Gastrocnemius medialis (tissue), 4 donors: ENCODE measurements at regions of chr6 and their contacts with region 1.

Region 1: DNA sequence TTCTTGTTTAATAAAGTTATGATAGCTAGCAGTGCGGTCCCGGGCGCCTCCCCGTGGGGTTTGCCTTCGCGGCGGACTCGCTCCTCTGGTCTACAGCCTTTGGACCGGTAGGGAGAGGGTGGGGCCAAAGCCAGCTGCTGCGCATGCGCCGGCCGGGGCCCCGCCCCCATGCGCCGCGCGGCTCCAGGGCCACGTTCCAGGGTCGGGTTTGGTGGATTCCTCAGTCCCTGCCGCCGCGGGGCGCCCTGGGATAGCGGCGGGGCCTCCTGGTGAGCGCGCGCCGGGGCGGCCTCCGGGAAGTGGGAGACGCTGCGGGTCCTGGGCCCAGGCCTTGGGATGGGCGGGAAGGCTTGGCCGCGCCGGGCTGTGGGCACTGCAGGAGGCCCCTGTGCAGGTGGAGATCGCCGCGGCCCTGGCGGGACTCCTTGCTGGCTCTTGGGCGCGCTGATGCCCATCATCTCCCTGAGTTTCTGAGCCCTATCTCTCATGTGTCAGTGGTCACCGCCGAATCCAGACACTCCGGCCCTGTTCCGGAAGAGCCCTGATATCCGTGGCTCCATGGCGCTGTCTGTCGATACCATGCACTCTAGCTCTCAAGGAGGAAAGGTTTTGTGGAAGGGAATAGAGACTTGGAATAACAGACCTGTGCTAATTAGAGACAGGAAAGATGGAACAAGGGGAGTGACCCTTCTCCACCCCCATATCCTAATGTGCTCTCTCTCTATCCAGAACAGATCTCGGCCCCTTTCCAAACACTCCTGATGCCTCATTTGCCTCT is at the start of gene VARS2:
- DNase-seq: peak; percentile 86 to 95
- ATAC-seq: peak; percentile 87 to 92
- H3K4me3 ChIP-seq: peak within 1 kb of the TSS; percentile 64 to 70 (median 68)
- H3K27ac ChIP-seq: peak within 1 kb of the TSS; percentile 88 to 96 (median 94)
- H3K4me1 ChIP-seq: peaks cover 18 to 26% of the 10 kb centered on the region in 2 donors
- H3K27me3 ChIP-seq: no peaks in the 10 kb centered on the region
- CTCF ChIP-seq: peak; percentile 39 to 68 (median 59)
- POLR2A ChIP-seq: peak; percentile 85 to 89
- total RNA-seq, gene VARS2: 16.0 to 38.5 (median 19.3) TPM

Region 2: GRCh38 chr6:30672445-30673253 is 241.6 kb before region 1 on chr6 and contains the start of gene DHX16:
- in situ Hi-C with region 1: no loop called
- intact Hi-C with region 1: loop called (anchors 5 kb)
- DNase-seq: peak; percentile 91 to 96
- ATAC-seq: peak; percentile 90 to 94
- H3K4me3 ChIP-seq: peak within 1 kb of the TSS; percentile 78 to 95 (median 91)
- H3K27ac ChIP-seq: peak within 1 kb of the TSS; percentile 78 to 88 (median 82)
- H3K4me1 ChIP-seq: peaks cover 15 to 18% of the 10 kb centered on the region in 2 donors
- H3K27me3 ChIP-seq: no peaks in the 10 kb centered on the region
- CTCF ChIP-seq: peak; percentile 65 to 89 (median 86)
- POLR2A ChIP-seq: peak in 1 of 2 donors; percentile 30
- total RNA-seq, gene DHX16: 39.1 to 74.8 (median 49.4) TPM

Region 3: GRCh38 chr6:30828027-30828960 is 86.0 kb before region 1 on chr6:
- in situ Hi-C with region 1: no loop called
- intact Hi-C with region 1: loop called (anchors 1 kb)
- DNase-seq: peak; percentile 86 to 94
- ATAC-seq: peak; percentile 89 to 93
- H3K4me3 ChIP-seq: peak overlapping the region in 2 of 4 donors; percentile 31 to 42
- H3K27ac ChIP-seq: peak overlapping the region; percentile 85 to 94 (median 92)
- H3K4me1 ChIP-seq: peaks cover 28 to 31% of the 10 kb centered on the region in 2 donors
- H3K27me3 ChIP-seq: no peaks in the 10 kb centered on the region
- CTCF ChIP-seq: peak; percentile 88 to 97 (median 93)
- POLR2A ChIP-seq: peak in 1 of 2 donors; percentile 52

Region 4: DNA sequence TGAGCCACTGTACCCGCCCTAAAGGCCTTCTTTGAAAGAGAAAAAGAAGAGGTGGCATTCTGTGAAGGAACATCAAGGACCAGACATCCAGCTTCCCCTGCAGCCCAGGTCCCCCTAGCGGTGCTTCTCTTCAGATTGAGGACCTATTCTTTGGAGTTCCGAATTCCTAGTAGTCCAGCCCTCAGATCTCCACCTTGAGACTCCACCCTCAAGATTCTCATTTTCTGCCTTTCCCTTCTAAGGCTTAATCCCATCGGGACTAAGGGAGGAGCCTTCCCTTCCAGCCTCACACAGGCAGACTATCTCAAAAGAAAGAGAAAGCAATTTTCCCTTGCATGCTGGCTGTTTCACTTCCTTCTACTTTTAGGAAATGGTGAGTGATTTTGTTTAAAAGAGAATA is 128.5 kb after region 1 on chr6:
- in situ Hi-C with region 1: loop called in 2 of 4 experiments (anchors 10 kb)
- intact Hi-C with region 1: loop called (anchors 1 kb)
- DNase-seq: peak; percentile 36 to 67
- ATAC-seq: peak; percentile 49 to 70
- H3K4me3 ChIP-seq: no peak overlapping the region
- H3K27ac ChIP-seq: peak overlapping the region in 1 of 4 donors; percentile 4
- H3K4me1 ChIP-seq: peaks cover 5 to 6% of the 10 kb centered on the region in 2 donors
- H3K27me3 ChIP-seq: no peaks in the 10 kb centered on the region
- CTCF ChIP-seq: peak; percentile 28 to 58 (median 49)
- POLR2A ChIP-seq: no peak

Region 5: DNA sequence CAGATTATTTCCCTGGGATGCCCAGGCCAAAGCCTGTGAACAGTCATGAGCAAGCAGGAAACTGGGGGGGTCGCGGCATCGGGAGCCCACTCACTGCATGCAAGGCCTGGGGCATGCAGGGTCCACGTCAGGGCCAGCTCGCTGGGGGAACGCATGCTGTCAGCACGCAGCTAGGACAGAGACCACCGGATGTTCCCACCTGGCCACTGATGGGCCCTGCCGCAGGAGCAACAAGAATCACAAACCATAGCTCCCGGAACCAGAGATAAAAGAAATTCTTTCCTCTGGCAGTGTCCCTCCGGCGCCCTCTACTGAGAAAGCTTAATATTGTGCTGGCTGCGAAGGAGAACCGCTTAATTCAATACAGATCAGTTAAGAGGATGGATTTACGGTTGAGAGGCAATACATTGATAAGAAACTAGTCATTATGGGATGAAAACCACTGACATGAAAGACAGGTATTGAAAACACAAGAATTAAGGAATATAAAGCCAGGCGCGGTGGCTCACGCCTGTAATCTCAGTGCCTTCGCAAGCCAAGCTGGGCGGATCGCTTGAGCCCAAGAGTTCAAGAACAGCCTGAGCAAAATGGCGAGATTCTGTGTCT is 165.5 kb after region 1 on chr6:
- in situ Hi-C with region 1: loop called (anchors 5 to 10 kb)
- intact Hi-C with region 1: loop called (anchors 1 kb)
- DNase-seq: peak; percentile 44
- ATAC-seq: peak; percentile 65 to 75
- H3K4me3 ChIP-seq: peak overlapping the region in 1 of 4 donors; percentile 14
- H3K27ac ChIP-seq: no peak overlapping the region
- H3K4me1 ChIP-seq: peaks cover 3 to 7% of the 10 kb centered on the region in 2 donors
- H3K27me3 ChIP-seq: no peaks in the 10 kb centered on the region
- CTCF ChIP-seq: peak; percentile 55 to 86 (median 66)
- POLR2A ChIP-seq: no peak

Region 6: DNA sequence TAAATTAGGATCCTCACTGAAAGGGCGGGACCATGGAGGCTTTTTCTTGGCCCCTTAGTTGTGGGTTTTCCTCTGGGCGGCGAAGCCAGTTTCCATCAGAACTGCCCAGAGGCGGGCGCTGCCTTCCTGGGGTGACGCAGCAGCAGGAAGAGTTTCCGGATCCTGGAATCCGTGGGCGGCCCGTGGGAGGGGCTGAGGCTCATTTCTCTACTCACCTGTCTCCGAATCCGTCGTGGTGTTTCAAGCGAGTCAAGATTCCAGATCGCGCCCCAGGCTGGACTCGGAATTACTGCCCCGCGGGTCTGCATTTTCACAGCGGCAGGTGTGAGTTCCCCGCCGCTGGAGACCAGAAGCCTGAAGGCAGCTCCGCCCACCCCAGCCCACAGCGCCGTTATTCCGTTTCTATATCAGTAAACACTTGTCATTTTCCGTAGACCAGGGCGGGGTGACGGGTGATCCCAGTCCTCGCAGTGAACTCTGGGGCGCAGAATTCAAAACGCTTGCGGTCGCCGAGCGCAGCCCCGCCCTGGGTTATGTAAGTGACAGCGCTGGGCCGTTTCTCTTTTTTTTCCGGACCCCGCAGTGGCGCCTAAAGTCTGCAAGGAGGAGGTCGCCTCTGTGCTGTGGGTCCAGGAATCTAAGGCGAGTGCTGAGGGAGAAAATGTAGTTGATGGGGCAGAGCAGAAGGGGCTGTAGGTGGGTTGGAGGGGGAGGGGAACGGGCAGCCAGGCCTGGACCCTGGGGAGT is 283.5 kb after region 1 on chr6:
- in situ Hi-C with region 1: no loop called
- intact Hi-C with region 1: loop called (anchors 10 kb)
- DNase-seq: peak; percentile 82 to 91
- ATAC-seq: peak; percentile 89 to 92
- H3K4me3 ChIP-seq: peak overlapping the region; percentile 57 to 85 (median 74)
- H3K27ac ChIP-seq: peak overlapping the region; percentile 90 to 93 (median 92)
- H3K4me1 ChIP-seq: peaks cover under 1 to 20% of the 10 kb centered on the region in 2 donors
- H3K27me3 ChIP-seq: no peaks in the 10 kb centered on the region
- CTCF ChIP-seq: no peak
- POLR2A ChIP-seq: peak; percentile 81 to 86